Psoas muscle (tissue), 8 donors: ENCODE measurements at regions of chr17 and their contacts with region 1.

Region 1: GRCh38 chr17:44466339-44466738 is 36.9 kb downstream of the GPATCH8 start:
- DNase-seq: no peak
- ATAC-seq: peak in 3 of 4 donors; percentile 70 to 77 (median 76)
- H3K4me3 ChIP-seq: peak overlapping the region; percentile 43
- H3K27ac ChIP-seq: peak overlapping the region; percentile 58
- H3K4me1 ChIP-seq: peaks cover 31% of the 10 kb centered on the region
- H3K27me3 ChIP-seq: no peaks in the 10 kb centered on the region
- CTCF ChIP-seq: no peak

Region 2: GRCh38 chr17:44095642-44096496 is 370.5 kb before region 1 on chr17:
- intact Hi-C with region 1: no loop called
- DNase-seq: peak; percentile 68 to 82
- ATAC-seq: peak; percentile 64 to 75 (median 70)
- H3K4me3 ChIP-seq: peak overlapping the region; percentile 56
- H3K27ac ChIP-seq: peak overlapping the region; percentile 92
- H3K4me1 ChIP-seq: peaks cover 57% of the 10 kb centered on the region
- H3K27me3 ChIP-seq: no peaks in the 10 kb centered on the region
- CTCF ChIP-seq: no peak

Region 3: DNA sequence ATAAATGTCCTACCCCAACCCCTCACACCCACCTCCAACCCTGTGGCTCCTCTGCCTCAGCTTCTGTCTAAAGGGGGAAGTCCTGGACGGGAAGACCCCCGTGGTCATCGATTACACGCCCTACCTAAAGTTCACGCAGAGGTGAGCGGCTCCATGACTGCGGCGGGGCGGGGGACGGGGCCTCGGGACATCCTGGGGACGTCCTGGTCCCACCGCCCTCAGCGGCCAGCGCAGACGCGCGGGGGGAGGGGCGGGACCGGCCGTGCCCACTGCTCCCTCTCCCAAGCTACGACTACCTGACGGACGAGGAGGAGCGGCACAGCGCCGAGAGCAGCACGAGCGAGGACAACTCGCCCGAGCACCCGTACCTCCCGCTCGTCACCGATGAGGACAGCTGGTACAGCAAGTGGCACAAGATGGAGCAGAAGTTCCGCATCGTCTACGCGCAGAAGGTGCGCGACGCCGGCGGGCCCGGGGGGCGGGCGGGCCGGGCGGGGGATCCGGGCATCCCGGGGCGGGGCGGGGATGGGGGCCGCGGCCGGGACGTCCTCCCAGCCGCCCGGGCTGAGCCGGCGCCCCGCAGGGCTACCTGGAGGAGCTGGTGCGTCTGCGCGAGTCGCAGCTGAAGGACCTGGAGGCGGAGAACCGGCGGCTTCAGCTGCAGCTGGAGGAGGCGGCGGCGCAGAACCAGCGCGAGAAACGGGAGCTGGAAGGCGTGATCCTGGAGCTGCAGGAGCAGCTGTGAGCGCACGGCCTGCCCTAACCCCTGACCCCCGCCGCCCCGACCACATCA is 151.3 kb before region 1 on chr17:
- intact Hi-C with region 1: no loop called
- DNase-seq: no peak
- ATAC-seq: no peak
- H3K4me3 ChIP-seq: peak overlapping the region; percentile 45
- H3K27ac ChIP-seq: no peak overlapping the region
- H3K4me1 ChIP-seq: no peaks in the 10 kb centered on the region
- H3K27me3 ChIP-seq: peaks cover 0 to 52% (median 24%) of the 10 kb centered on the region in 3 donors
- CTCF ChIP-seq: no peak

Region 4: DNA sequence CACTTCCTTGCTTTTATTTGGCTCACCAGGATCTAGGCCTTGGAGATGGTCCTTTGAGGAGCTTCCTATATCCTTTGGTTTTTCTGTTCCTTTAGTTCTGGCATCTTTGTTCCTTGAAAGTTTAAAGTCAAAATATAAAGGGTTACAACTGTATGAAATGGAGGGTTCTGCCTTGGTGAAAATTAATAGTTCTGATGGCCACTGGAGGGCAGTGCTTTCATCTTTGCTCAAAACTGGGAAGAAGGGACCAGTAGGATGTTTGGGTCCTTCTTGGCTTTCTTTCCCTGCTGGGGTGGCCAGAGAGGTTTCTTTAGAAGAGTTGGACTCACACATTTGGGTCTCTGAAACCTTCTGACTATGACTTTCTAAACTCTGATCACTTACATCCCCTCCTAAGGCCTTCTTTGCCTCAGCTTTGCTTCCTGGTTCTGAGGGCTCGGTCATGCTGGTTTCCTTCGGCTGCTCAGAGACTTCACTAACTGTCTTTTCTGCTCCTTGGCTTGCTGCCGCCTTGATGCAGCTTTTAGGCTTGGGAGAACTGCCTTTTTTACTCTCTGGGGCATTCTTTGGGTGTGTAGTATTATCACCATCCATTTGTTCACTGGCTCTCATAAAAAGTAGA is 66.0 kb before region 1 on chr17:
- intact Hi-C with region 1: no loop called
- DNase-seq: no peak
- ATAC-seq: peak; percentile 48 to 78 (median 60)
- H3K4me3 ChIP-seq: no peak overlapping the region
- H3K27ac ChIP-seq: no peak overlapping the region
- H3K4me1 ChIP-seq: no peaks in the 10 kb centered on the region
- H3K27me3 ChIP-seq: no peaks in the 10 kb centered on the region
- CTCF ChIP-seq: peak; percentile 51

Region 5: GRCh38 chr17:44424828-44425461 is 41.4 kb before region 1 on chr17:
- intact Hi-C with region 1: loop called (anchors 5 kb)
- DNase-seq: no peak
- ATAC-seq: no peak
- H3K4me3 ChIP-seq: no peak overlapping the region
- H3K27ac ChIP-seq: no peak overlapping the region
- H3K4me1 ChIP-seq: no peaks in the 10 kb centered on the region
- H3K27me3 ChIP-seq: no peaks in the 10 kb centered on the region
- CTCF ChIP-seq: no peak

Region 6: GRCh38 chr17:44432254-44433157 is 33.8 kb before region 1 on chr17:
- intact Hi-C with region 1: loop called (anchors 5 kb)
- DNase-seq: no peak
- ATAC-seq: peak; percentile 38 to 78 (median 66)
- H3K4me3 ChIP-seq: no peak overlapping the region
- H3K27ac ChIP-seq: peak overlapping the region; percentile 11
- H3K4me1 ChIP-seq: peaks cover 30% of the 10 kb centered on the region
- H3K27me3 ChIP-seq: no peaks in the 10 kb centered on the region
- CTCF ChIP-seq: no peak

Region 7: DNA sequence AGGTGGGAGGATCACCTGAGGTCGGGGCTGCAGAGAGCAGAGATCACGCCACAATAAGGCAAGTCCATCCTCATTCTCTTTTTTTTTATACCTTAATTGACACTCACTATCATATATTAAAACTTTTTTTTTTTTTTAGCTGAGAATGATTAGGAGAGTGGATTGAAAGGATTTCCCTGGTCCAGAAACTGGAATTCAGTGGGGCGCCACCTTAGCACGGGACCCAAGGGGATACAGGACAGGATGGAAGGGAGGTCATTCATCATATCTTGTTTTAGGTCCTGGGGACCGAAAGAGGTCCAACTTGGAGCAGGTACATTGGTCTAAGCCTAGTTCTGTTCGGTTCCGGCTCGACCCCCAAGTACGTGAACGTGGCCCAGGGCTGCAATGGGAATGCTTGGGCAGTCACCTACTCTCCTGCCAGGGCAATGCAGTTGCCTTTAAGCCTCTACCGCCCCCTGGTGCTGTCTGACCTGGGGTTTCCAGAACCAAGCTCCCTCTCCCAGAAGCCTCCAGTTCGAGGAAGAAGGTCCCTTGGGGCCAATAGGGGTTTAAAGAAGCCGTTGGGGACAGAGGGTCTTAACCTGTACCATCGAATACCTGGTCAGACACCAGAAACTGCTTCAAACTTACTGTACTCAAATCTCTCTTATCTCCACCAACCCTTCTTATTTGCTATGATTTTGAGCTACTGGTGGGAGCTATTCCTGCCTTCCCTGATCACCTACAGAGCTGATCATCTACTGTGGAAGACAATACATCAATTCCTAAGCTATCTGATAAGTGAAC is 56.7 kb after region 1 on chr17:
- intact Hi-C with region 1: no loop called
- DNase-seq: peak; percentile 67 to 90
- ATAC-seq: peak; percentile 90 to 100 (median 98)
- H3K4me3 ChIP-seq: no peak overlapping the region
- H3K27ac ChIP-seq: no peak overlapping the region
- H3K4me1 ChIP-seq: no peaks in the 10 kb centered on the region
- H3K27me3 ChIP-seq: peaks cover 0 to 2% (median 0%) of the 10 kb centered on the region in 3 donors
- CTCF ChIP-seq: peak; percentile 75